ENCODE measurements at regions of chr1 and their contacts with region 1.

Region 1: DNA sequence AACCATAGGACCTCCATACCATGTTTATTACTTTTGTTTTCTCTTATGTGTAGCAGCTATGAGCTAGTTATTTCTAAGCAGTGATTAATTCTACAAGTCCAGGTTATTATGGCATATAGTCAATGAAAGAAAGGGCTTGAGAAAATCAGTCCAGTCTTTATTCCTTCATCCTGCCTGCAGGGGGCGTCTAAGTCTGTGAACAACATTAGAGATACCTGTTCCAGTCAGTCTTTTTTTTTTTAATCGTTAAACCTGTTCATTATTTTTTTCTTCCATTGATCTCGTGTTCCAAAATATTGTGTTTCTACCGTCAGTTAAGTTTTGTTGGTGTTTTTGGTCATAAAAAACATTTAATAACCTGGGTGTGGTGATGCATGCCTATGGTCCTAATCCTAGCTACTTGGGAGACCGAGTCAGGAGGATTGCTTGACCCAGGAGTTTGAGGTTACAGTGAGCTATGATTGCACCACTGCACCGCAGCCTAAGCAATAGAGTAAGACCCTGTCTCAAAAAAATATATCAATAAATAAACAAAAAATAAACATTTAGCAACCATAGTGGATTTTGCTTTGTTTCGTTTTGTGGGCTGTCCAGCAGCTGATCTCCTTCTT is 29.4 kb upstream of the CD2 start:
- DNase-seq: peak in 1 of 2 experiments; percentile 72
- H3K4me3 ChIP-seq: no peak overlapping the region
- H3K27ac ChIP-seq: no peak overlapping the region
- H3K4me1 ChIP-seq: no peaks in the 10 kb centered on the region
- H3K27me3 ChIP-seq: no peaks in the 10 kb centered on the region
- CTCF ChIP-seq: peak in 2 of 3 experiments; percentile 34 to 63; a peak in 2 of 4 replicates
- EP300 ChIP-seq: no peak
- POLR2A ChIP-seq: no peak
- RAD21 ChIP-seq: peak; percentile 59 to 61

Region 2: GRCh38 chr1:116693759-116694482 is 30.9 kb before region 1 on chr1:
- CTCF ChIA-PET with region 1: interaction called, 10 read pairs
- POLR2A ChIA-PET with region 1: no interaction called
- DNase-seq: no peak
- H3K4me3 ChIP-seq: no peak overlapping the region
- H3K27ac ChIP-seq: no peak overlapping the region
- H3K4me1 ChIP-seq: peaks cover 5 to 12% (median 6%) of the 10 kb centered on the region in 4 experiments; a peak in 6 of 7 replicates
- H3K27me3 ChIP-seq: no peaks in the 10 kb centered on the region
- CTCF ChIP-seq: no peak
- EP300 ChIP-seq: no peak
- POLR2A ChIP-seq: no peak
- RAD21 ChIP-seq: no peak

Region 3: GRCh38 chr1:116711263-116711840 is 13.5 kb before region 1 on chr1:
- CTCF ChIA-PET with region 1: interaction called, 17 read pairs
- POLR2A ChIA-PET with region 1: no interaction called
- DNase-seq: no peak
- H3K4me3 ChIP-seq: no peak overlapping the region
- H3K27ac ChIP-seq: no peak overlapping the region
- H3K4me1 ChIP-seq: peaks cover 6 to 22% (median 9%) of the 10 kb centered on the region in 4 experiments
- H3K27me3 ChIP-seq: no peaks in the 10 kb centered on the region
- CTCF ChIP-seq: no peak
- EP300 ChIP-seq: no peak
- POLR2A ChIP-seq: no peak
- RAD21 ChIP-seq: no peak

Region 4: DNA sequence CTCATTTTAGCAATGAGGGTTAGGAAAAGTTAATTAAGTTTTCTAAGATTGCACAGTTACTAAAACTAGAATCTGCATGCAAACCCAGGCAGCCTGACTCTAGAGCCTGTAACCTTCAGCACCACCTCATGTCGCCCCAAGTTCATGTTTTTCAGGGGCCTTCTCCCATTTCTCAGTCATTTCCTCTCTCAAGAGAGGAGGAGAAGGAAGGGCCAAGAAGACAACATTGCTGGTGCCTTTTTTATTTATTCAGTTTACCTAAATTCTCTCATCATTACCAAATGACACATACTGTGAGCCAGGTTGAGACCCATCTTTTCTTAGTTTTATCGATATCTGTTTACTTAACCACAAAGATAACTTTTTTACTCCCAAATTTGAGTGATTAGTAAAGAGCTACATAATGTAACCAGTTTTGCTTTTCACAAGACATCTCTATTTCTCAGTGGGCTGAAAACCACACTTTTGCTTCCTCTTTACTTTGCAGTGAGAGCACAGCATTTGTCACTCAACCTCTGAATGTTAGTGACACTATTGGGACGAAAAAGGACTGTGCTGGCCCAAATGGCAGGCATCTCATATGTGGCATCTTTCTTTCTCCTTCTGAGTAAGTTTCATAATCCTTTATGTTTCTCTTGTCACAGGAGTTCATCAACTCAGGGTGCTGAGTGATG is 276.5 kb after region 1 on chr1 and contains the start of gene CD101:
- CTCF ChIA-PET with region 1: no interaction called
- POLR2A ChIA-PET with region 1: no interaction called
- DNase-seq: no peak
- H3K4me3 ChIP-seq: no peak within 1 kb of the TSS
- H3K27ac ChIP-seq: no peak within 1 kb of the TSS
- H3K4me1 ChIP-seq: peaks cover 0 to 10% (median 3%) of the 10 kb centered on the region in 4 experiments; a peak in 6 of 7 replicates
- H3K27me3 ChIP-seq: no peaks in the 10 kb centered on the region
- CTCF ChIP-seq: no peak
- EP300 ChIP-seq: no peak
- POLR2A ChIP-seq: no peak
- RAD21 ChIP-seq: no peak
- total RNA-seq, gene CD101: 1.1 and 1.4 TPM in 2 replicates